ENCODE measurements at regions of chr5 and their contacts with region 1.

Region 1: DNA sequence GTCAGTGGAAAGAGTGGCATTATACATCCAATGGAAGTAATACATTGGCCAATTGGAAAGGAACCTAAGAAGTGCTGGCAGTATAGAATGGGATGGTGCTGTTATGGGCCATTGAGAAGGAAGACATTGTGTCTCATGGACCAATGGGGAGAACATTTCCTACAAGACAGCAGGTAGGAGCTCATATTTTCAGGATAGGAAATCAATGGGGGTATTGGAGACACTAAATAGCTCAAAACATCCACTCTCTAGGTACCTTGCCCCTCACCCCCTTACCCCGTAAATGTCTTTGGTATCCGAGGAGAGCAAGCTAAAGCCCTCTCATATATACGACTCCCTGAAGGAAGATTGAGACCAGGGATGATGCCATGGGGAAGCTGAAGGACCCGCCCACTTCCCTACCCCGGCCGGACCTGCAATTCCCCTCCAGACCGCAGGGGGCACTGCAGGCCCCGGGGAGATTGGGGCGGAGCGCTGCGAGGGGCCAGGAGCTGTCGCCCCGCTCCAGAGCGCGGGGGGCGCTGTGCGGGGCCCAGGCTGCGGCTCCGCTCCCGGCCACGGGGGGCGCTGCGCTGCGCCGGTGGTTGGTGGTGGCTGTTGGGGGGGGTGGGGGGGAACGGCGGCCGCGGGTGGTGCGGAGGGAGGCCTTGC is at the start of gene KDM3B:
- DNase-seq: peak; percentile 94 to 97 (median 95)
- ATAC-seq: peak; percentile 76
- H3K4me3 ChIP-seq: peak within 1 kb of the TSS; percentile 96
- H3K27ac ChIP-seq: peak within 1 kb of the TSS; percentile 93
- H3K4me1 ChIP-seq: peaks cover 6 to 15% of the 10 kb centered on the region in 2 experiments; a peak in 4 of 5 replicates
- H3K27me3 ChIP-seq: no peaks in the 10 kb centered on the region
- CTCF ChIP-seq: peak; percentile 99 to 100 (median 99)
- EP300 ChIP-seq: peak; percentile 55; the same call in 1 of the 2 replicates
- POLR2A ChIP-seq: no peak
- RAD21 ChIP-seq: peak; percentile 40 to 47; a peak in 3 of 4 replicates
- polyA plus RNA-seq, gene KDM3B: 13.8 to 15.0 TPM

Region 2: GRCh38 chr5:138178516-138179276 is 173.5 kb before region 1 on chr5 and contains the starts of genes BRD8 and KIF20A:
- CTCF ChIA-PET with region 1: no interaction called
- POLR2A ChIA-PET with region 1: interaction called, 6 read pairs
- in situ Hi-C with region 1: no loop called
- intact Hi-C with region 1: loop called (anchors 5 kb)
- DNase-seq: peak; percentile 86 to 98 (median 91)
- ATAC-seq: peak; percentile 90
- H3K4me3 ChIP-seq: peak within 1 kb of the TSS; percentile 63
- H3K27ac ChIP-seq: peak within 1 kb of the TSS; percentile 99
- H3K4me1 ChIP-seq: peaks cover 0 to 5% of the 10 kb centered on the region in 2 experiments; a peak in 1 of 5 replicates
- H3K27me3 ChIP-seq: no peaks in the 10 kb centered on the region
- CTCF ChIP-seq: no peak; a peak in 1 of 6 replicates
- EP300 ChIP-seq: no peak
- POLR2A ChIP-seq: peak; percentile 94
- RAD21 ChIP-seq: no peak
- polyA plus RNA-seq, gene BRD8: 89.5 to 141 TPM
- polyA plus RNA-seq, gene KIF20A: 39.8 to 58.7 TPM

Region 3: GRCh38 chr5:138331449-138332368 is 20.5 kb before region 1 on chr5 and contains the start of gene CDC25C:
- CTCF ChIA-PET with region 1: interaction called, 31 read pairs
- POLR2A ChIA-PET with region 1: interaction called, 416 read pairs
- in situ Hi-C with region 1: no loop called
- intact Hi-C with region 1: no loop called
- DNase-seq: peak; percentile 95 to 99 (median 96)
- ATAC-seq: peak; percentile 99
- H3K4me3 ChIP-seq: peak within 1 kb of the TSS; percentile 64
- H3K27ac ChIP-seq: peak within 1 kb of the TSS; percentile 89
- H3K4me1 ChIP-seq: peaks cover 4 to 15% of the 10 kb centered on the region in 2 experiments; a peak in 4 of 5 replicates
- H3K27me3 ChIP-seq: no peaks in the 10 kb centered on the region
- CTCF ChIP-seq: no peak
- EP300 ChIP-seq: peak; percentile 36
- POLR2A ChIP-seq: peak; percentile 95
- RAD21 ChIP-seq: 0 out of 4 replicates have a peak, but pooled peaks of 1 of the 2 experiments have one; percentile 2
- polyA plus RNA-seq, gene CDC25C: 32.2 to 50.4 TPM

Region 4: DNA sequence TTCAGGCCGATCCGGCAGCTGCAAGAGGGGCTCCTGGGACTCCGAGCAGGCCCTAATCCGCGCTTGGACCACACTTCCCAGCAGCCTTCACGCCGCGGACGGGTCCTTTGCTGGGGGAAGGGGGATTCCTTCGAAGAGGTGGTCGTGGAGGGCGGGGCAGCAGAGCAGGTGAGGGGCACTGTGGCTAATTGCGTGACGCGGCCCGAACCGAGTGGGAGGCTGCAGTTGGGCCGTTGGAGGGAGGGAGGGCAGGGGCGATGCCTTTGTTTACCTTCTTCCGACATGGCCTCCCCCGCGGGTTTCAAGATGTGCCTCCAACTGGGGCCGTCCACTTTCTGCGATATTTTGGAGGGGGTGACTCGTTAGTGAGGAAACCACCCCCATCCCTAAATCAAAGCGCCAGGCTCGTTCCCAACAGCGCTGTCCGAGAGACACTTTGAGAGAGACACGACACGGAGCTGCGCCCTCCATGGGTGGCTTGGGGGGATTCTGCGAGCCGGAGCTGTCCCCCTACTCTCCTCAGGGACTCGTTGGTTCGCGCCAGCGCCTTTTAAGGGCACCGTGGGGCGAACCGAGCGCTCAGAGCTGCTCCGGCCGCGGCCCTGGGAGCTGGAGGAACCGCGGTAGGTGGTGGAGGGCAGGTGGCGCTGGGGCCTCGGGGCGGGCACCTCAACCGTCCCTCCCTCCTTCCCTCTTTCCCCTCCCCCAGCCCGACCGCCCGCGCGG is 14.3 kb before region 1 on chr5 and contains the start of gene FAM53C:
- CTCF ChIA-PET with region 1: interaction called, 31 read pairs
- POLR2A ChIA-PET with region 1: interaction called, 416 read pairs
- in situ Hi-C with region 1: no loop called
- intact Hi-C with region 1: loop called (anchors 2 kb)
- DNase-seq: peak in 3 of 4 experiments; percentile 56 to 95 (median 90)
- ATAC-seq: peak; percentile 93
- H3K4me3 ChIP-seq: peak within 1 kb of the TSS; percentile 63
- H3K27ac ChIP-seq: peak within 1 kb of the TSS; percentile 97
- H3K4me1 ChIP-seq: peaks cover 9 to 28% of the 10 kb centered on the region in 2 experiments
- H3K27me3 ChIP-seq: no peaks in the 10 kb centered on the region
- CTCF ChIP-seq: peak in 1 of 3 experiments; percentile 4; a peak in 2 of 6 replicates
- EP300 ChIP-seq: peak; percentile 15; the same call in 1 of the 2 replicates
- POLR2A ChIP-seq: peak; percentile 99
- RAD21 ChIP-seq: no peak
- polyA plus RNA-seq, gene FAM53C: 9.7 to 11.1 TPM

Region 5: GRCh38 chr5:138369706-138370105 is 17.5 kb after region 1 on chr5:
- CTCF ChIA-PET with region 1: interaction called, 3 read pairs
- POLR2A ChIA-PET with region 1: interaction called, 22 read pairs
- in situ Hi-C with region 1: no loop called
- intact Hi-C with region 1: no loop called
- DNase-seq: no peak
- ATAC-seq: no peak
- H3K4me3 ChIP-seq: no peak overlapping the region
- H3K27ac ChIP-seq: no peak overlapping the region; the same call in 2 of the 3 replicates
- H3K4me1 ChIP-seq: peaks cover 0 to 16% of the 10 kb centered on the region in 2 experiments
- H3K27me3 ChIP-seq: no peaks in the 10 kb centered on the region
- CTCF ChIP-seq: no peak
- EP300 ChIP-seq: no peak
- POLR2A ChIP-seq: no peak
- RAD21 ChIP-seq: no peak

Region 6: GRCh38 chr5:138408023-138408422 is 55.8 kb after region 1 on chr5:
- CTCF ChIA-PET with region 1: interaction called, 5 read pairs
- POLR2A ChIA-PET with region 1: no interaction called
- in situ Hi-C with region 1: no loop called
- intact Hi-C with region 1: loop called (anchors 2 kb)
- DNase-seq: peak in 1 of 4 experiments; percentile 5
- ATAC-seq: peak; percentile 43
- H3K4me3 ChIP-seq: no peak overlapping the region
- H3K27ac ChIP-seq: no peak overlapping the region
- H3K4me1 ChIP-seq: no peaks in the 10 kb centered on the region
- H3K27me3 ChIP-seq: no peaks in the 10 kb centered on the region
- CTCF ChIP-seq: no peak
- EP300 ChIP-seq: no peak
- POLR2A ChIP-seq: no peak
- RAD21 ChIP-seq: no peak

Region 7: GRCh38 chr5:138528208-138528607 is 176.0 kb after region 1 on chr5:
- CTCF ChIA-PET with region 1: no interaction called
- POLR2A ChIA-PET with region 1: no interaction called
- in situ Hi-C with region 1: no loop called
- intact Hi-C with region 1: no loop called
- DNase-seq: no peak
- ATAC-seq: no peak
- H3K4me3 ChIP-seq: no peak overlapping the region
- H3K27ac ChIP-seq: no peak overlapping the region
- H3K4me1 ChIP-seq: peaks cover 4 to 11% of the 10 kb centered on the region in 2 experiments; a peak in 3 of 5 replicates
- H3K27me3 ChIP-seq: no peaks in the 10 kb centered on the region
- CTCF ChIP-seq: no peak
- EP300 ChIP-seq: no peak
- POLR2A ChIP-seq: no peak
- RAD21 ChIP-seq: no peak

Measured in K562 (cell line).